H1 (cell line): ENCODE measurements at regions of chr10 and their contacts with region 1.

Region 1: GRCh38 chr10:98028168-98028770 is 2.2 kb downstream of the CRTAC1 start:
- DNase-seq: peak; percentile 34 to 89
- H3K4me3 ChIP-seq: no peak overlapping the region
- H3K27ac ChIP-seq: no peak overlapping the region
- H3K4me1 ChIP-seq: peaks cover 2 to 7% (median 6%) of the 10 kb centered on the region in 4 experiments; a peak in 5 of 7 replicates
- H3K27me3 ChIP-seq: peaks cover 40 to 50% (median 49%) of the 10 kb centered on the region in 4 experiments
- CTCF ChIP-seq: peak; percentile 86 to 98 (median 97)
- EP300 ChIP-seq: no peak
- POLR2A ChIP-seq: no peak
- RAD21 ChIP-seq: peak; percentile 81 to 91

Region 2: GRCh38 chr10:97903128-97904017 is 124.9 kb before region 1 on chr10:
- CTCF ChIA-PET with region 1: interaction called, 39 read pairs
- POLR2A ChIA-PET with region 1: no interaction called
- DNase-seq: no peak
- H3K4me3 ChIP-seq: no peak overlapping the region
- H3K27ac ChIP-seq: no peak overlapping the region
- H3K4me1 ChIP-seq: peaks cover 0 to 4% (median 1%) of the 10 kb centered on the region in 4 experiments; a peak in 3 of 7 replicates
- H3K27me3 ChIP-seq: no peaks in the 10 kb centered on the region; a peak in 2 of 7 replicates
- CTCF ChIP-seq: peak in 1 of 3 experiments; percentile 12; a peak in 1 of 4 replicates
- EP300 ChIP-seq: no peak
- POLR2A ChIP-seq: no peak
- RAD21 ChIP-seq: peak in 1 of 2 experiments; percentile 43; a peak in 2 of 4 replicates

Region 3: DNA sequence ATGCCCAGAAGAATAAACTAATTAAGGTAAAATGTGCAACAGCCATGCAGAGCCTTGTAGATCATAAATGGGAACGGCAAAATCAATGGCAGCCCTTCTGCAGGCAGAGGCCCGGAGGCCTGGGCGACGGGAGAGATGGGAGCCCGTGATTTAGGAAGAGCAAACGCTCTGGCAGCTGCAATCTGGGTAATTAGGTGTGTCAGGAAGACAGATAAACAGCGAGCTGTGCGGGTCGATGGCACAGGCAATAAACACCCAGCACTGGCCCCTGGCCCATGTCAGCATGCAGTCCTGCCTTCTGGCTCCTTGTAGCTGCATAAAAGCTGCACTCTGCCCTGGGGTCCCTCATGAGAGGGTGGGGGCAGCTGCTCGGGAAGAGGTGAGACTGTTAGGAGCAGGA is 100.6 kb before region 1 on chr10:
- CTCF ChIA-PET with region 1: interaction called, 26 read pairs
- POLR2A ChIA-PET with region 1: interaction called, 4 read pairs
- DNase-seq: no peak
- H3K4me3 ChIP-seq: no peak overlapping the region
- H3K27ac ChIP-seq: no peak overlapping the region
- H3K4me1 ChIP-seq: no peaks in the 10 kb centered on the region
- H3K27me3 ChIP-seq: no peaks in the 10 kb centered on the region
- CTCF ChIP-seq: no peak
- EP300 ChIP-seq: no peak
- POLR2A ChIP-seq: no peak
- RAD21 ChIP-seq: no peak

Region 4: GRCh38 chr10:98006266-98006665 is 22.0 kb before region 1 on chr10:
- CTCF ChIA-PET with region 1: interaction called, 120 read pairs
- POLR2A ChIA-PET with region 1: interaction called, 6 read pairs
- DNase-seq: no peak
- H3K4me3 ChIP-seq: peak overlapping the region; percentile 13 to 50 (median 28); a peak in 7 of 8 replicates
- H3K27ac ChIP-seq: no peak overlapping the region
- H3K4me1 ChIP-seq: peaks cover 0 to 18% (median 3%) of the 10 kb centered on the region in 4 experiments; a peak in 4 of 7 replicates
- H3K27me3 ChIP-seq: no peaks in the 10 kb centered on the region; a peak in 2 of 7 replicates
- CTCF ChIP-seq: no peak
- EP300 ChIP-seq: no peak
- POLR2A ChIP-seq: no peak
- RAD21 ChIP-seq: no peak; a peak in 1 of 4 replicates

Region 5: DNA sequence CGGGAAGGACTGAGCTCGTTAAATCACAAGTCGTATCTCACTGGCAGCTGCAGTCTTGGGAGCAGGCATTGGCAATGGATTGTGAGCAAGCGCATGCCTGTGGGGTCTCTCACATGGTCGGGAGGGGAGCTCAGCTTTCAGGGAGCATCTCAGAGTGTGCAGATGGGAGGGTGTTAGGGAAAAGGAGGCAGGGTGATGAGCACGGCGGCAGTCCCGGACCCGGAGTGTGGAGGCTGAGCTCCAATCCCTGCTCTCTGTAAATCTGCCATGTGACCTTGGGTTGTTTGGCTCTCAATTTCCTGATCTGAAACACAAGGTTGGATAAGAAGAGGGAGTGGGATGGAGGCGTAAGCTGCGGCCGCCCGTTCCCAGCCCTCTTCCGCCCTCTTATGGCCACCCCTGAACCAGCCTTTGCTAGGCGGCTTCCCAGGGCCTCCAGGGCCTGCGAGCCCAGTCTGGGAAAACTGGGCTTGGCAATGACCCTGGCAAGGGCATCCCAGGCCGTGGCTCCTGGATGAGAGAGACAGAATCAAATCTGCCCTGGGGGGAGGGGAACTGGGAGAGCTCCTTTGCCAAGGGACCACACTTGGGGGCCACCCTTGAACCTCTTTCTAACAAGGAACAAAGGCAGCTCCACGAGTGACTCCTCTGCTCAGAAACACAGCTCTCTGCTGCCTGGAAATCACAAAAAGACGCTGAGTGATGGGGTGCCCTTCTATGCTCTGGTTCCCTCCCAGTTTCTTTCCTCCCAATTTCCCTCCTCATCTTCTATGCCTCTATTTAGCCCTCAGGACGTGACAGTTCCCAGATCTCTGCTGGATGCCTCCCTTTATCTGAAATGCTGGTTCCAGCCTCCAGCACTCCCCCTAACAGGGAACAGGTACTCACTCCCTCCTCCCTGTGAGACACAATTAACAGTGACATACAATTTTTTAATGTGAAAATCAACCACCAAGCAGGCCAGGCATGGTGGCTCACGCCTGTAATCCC is 281.4 kb after region 1 on chr10:
- CTCF ChIA-PET with region 1: no interaction called
- POLR2A ChIA-PET with region 1: no interaction called
- DNase-seq: peak; percentile 58 to 86
- H3K4me3 ChIP-seq: peak overlapping the region in 3 of 4 experiments; percentile 13 to 48 (median 36); a peak in 6 of 8 replicates
- H3K27ac ChIP-seq: no peak overlapping the region
- H3K4me1 ChIP-seq: peaks cover 0 to 7% (median 5%) of the 10 kb centered on the region in 4 experiments; a peak in 6 of 7 replicates
- H3K27me3 ChIP-seq: no peaks in the 10 kb centered on the region
- CTCF ChIP-seq: peak; percentile 89 to 94 (median 90)
- EP300 ChIP-seq: no peak
- POLR2A ChIP-seq: no peak
- RAD21 ChIP-seq: peak; percentile 90 to 95